GM13977 (cell line): ENCODE measurements at regions of chr4 and their contacts with region 1.

Region 1: DNA sequence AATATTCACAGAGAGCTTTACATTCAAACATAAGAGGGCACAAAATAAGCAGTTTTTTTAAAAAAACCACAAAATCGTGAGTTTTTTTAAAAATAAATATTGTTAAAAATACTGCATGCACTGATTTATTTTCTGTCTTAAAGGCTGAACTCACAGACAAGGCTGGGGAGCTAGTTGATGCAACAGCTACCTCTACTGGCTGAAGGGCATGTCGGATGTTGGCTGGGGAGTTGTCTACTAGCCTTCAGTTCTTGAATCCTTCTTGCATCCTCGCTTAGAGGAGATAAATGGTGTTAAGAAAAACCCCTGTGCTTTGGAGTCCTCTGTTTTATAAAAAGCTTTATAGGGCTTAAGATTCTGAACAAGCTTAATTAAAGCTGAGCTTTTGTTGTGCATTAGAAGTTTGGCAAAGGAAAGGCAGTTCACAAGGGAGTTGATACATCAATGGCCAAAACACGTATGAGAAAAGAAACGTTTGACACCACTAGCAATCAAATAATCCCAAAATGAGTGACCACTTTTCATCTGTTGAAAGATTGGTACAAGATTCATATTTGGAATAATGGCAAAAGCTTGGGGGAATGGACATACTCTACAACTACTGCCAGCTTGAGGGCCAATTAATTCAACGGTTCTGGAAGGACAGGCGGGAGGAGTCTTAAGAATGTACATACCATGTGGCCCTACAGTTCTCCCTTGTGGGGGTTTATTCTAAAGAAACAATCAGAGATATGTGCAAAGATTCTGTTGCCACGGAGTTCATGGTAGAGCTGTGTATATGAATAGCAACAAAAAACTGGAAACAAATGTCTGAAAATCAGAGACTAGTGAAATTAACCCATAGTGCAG is 94.7 kb downstream of the SEL1L3 start:
- DNase-seq: peak; percentile 31
- CTCF ChIP-seq: peak; percentile 67

Region 2: DNA sequence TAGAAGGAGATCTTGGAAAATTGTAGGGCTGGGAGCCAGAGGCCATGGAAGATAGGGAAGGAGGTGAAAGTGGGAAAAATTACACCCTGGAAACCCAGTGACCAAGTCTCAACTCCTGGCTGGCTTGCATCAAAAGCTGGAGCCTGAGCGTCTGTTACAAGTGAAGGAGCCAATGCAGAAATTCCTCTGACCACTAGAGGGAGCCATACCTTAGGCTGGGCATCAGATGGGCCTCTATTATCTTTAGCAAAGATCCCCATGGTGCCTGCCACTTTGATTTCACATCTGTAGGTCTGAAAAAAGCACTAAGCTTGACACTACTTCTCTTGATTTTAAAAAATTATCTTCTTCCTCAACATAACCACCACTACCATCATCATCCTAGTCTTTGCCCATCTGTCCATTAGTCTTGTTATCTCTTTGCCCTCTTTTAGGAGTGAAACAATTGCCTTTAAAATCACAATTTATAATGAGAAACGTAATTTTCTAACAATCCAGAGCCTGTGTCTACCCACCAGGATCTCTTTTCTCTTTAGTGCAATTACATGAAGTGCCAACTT is 328.1 kb before region 1 on chr4:
- in situ Hi-C with region 1: loop called (anchors 25 kb)
- DNase-seq: peak; percentile 74
- CTCF ChIP-seq: peak; percentile 90

Region 3: GRCh38 chr4:26288355-26288909 is 520.3 kb after region 1 on chr4:
- in situ Hi-C with region 1: no loop called
- DNase-seq: peak; percentile 61
- CTCF ChIP-seq: peak; percentile 4